ENCODE measurements at regions of chr1 and their contacts with region 1.

Region 1: GRCh38 chr1:226736908-226737818 is 1.9 kb downstream of the ITPKB start:
- DNase-seq: peak; percentile 62
- H3K4me3 Mint-ChIP-seq: peak overlapping the region; percentile 87
- H3K27ac Mint-ChIP-seq: peak overlapping the region; percentile 92
- H3K4me1 Mint-ChIP-seq: peaks cover 57% of the 10 kb centered on the region
- H3K27me3 Mint-ChIP-seq: no peaks in the 10 kb centered on the region

Region 2: DNA sequence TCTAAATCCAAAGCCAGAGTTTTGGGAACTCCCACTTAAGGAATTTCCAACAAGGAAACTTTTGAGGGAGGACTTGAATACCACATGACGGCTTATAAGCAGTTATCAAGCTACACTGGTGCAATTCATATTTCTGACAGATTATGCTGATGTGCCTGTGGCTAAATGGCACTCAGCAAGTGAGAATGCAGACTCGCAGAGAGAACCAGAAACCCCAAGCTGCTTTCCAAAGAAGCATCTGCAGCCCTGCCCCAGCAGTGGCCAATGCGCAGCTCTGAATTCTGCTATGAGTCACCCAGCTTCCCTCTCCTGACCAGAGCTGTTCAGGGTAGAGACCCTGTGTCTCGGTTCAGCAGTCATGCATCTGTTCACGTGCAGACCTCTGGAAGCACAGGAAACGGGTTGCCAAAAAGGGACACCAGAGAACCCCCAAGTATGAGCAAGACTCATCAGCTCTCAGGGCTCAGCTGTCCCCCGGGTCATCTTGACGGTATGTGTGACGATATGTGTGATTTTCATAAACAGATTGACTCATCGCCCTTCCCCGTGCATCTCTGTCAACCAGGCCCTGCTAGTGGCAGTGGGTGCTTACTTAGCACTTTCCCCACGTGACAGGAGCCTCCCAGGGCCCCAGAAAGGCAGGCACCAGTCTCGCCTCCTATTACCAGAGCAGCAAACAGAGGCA is 74.4 kb before region 1 on chr1:
- CTCF ChIA-PET with region 1: interaction called, 12 read pairs
- POLR2A ChIA-PET with region 1: interaction called, 7 read pairs
- DNase-seq: peak; percentile 89
- H3K4me3 Mint-ChIP-seq: peak overlapping the region; percentile 57
- H3K27ac Mint-ChIP-seq: peak overlapping the region; percentile 92
- H3K4me1 Mint-ChIP-seq: peaks cover 86% of the 10 kb centered on the region
- H3K27me3 Mint-ChIP-seq: no peaks in the 10 kb centered on the region

Measured in activated CD4-positive, alpha-beta memory T cell treated with anti-CD3 and anti-CD28 coated beads, Interleukin-2, amount 10 ng/mL, durations not matched to agents 7 days and 5 days (primary cell).